ENCODE measurements at regions of chr22 and their contacts with region 1.

Region 1: GRCh38 chr22:34902335-34902734 is 163.6 kb upstream of the ISX start:
- DNase-seq: no peak
- H3K4me3 ChIP-seq: no peak overlapping the region
- H3K27ac ChIP-seq: no peak overlapping the region
- H3K4me1 ChIP-seq: no peaks in the 10 kb centered on the region
- H3K27me3 ChIP-seq: no peaks in the 10 kb centered on the region
- CTCF ChIP-seq: no peak
- EP300 ChIP-seq: no peak
- POLR2A ChIP-seq: no peak

Region 2: DNA sequence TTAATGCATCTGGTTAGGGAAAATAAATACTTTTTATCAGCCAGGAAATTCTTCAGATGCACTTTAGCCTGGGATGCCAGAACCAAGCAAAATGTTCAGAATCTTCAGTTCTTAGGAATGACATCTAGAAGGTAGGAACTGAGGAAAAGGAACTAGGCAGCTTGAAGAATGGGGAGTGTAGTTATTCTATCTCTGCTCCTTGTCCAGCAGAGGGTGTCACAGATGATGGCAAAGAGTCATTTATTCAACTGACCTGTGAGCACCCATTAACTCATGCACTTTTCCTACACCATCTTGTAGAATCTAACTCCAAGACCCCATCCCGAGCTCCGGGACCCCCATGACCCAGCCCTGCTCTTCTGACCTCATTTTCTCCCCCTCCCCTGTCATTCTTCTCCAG is 41.5 kb after region 1 on chr22:
- intact Hi-C with region 1: no loop called
- DNase-seq: no peak
- H3K4me3 ChIP-seq: no peak overlapping the region
- H3K27ac ChIP-seq: no peak overlapping the region
- H3K4me1 ChIP-seq: no peaks in the 10 kb centered on the region
- H3K27me3 ChIP-seq: no peaks in the 10 kb centered on the region
- CTCF ChIP-seq: no peak
- EP300 ChIP-seq: no peak
- POLR2A ChIP-seq: no peak

Region 3: DNA sequence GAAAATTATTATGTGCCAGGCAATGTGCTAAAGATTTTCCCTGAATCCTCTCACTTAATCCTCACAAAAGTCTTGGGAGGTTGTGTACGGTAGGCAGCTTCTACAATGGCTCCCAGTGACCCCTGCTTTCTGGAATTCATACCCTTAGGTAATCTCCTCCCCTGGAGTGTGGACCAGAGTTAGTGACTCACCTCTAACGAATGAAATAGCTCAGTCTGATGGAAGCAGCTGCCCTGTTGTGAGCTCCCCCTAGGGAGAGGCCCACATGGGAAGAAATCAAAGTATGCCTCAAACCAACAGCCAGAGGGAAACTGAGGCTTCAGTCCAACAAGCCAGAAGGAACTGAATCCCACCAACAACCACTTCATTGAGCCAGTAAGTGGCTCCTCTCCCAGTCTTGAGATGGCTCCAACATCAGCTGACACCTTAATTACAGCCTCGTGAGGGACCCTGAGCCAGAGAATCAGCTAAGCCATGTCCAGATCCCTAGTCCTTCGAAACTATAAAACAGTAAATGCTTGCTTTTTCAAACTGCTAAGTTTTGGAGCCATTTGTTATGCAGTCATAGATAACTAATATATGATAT is 64.7 kb after region 1 on chr22:
- intact Hi-C with region 1: loop called (anchors 10 kb)
- DNase-seq: no peak
- H3K4me3 ChIP-seq: no peak overlapping the region
- H3K27ac ChIP-seq: no peak overlapping the region
- H3K4me1 ChIP-seq: no peaks in the 10 kb centered on the region
- H3K27me3 ChIP-seq: no peaks in the 10 kb centered on the region
- CTCF ChIP-seq: no peak
- EP300 ChIP-seq: no peak
- POLR2A ChIP-seq: no peak

Measured in sigmoid colon (tissue), 7 donors.